AG04449 (cell line): ENCODE measurements at regions of chr12 and their contacts with region 1.

Region 1: DNA sequence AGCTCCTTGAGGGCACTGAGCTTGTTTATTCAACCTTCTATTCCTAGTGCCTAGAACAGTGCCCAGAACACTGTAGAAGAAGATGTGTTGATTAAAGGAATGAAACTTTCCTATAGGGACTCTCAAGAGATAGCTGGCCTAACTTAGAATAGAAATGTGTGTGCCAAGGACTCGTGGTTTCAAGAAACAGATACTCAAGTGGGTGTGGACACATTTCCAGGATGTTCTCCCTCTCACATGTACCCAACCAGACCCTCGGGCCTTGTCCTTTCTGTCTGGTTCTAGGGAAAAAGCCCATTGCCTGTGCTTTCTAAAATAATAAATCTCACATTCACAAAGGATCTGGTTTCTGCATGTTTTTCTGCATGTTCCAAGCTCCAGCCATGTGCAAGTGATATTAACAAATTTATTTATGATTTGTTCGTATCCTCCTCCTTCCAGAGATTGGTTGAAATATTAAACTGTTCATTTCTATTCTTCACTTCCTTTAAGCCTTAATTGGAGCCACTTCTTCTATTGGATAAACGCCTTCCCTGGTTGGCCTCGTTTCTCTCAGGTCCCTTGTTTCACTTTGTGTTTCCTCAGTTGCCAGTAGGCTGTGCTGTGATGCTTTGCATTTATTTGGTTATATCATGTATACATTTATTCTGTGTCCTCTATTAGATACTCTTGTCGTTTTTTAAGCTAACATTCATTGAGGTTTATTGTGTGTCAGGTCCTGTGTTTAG is 89.8 kb downstream of the CRADD start:
- DNase-seq: no peak
- H3K4me3 ChIP-seq: no peak overlapping the region
- CTCF ChIP-seq: peak; percentile 61

Region 2: GRCh38 chr12:93502802-93503623 is 263.9 kb before region 1 on chr12:
- CTCF ChIA-PET with region 1: interaction called, 45 read pairs
- POLR2A ChIA-PET with region 1: no interaction called
- DNase-seq: no peak
- H3K4me3 ChIP-seq: no peak overlapping the region
- CTCF ChIP-seq: peak; percentile 55

Region 3: DNA sequence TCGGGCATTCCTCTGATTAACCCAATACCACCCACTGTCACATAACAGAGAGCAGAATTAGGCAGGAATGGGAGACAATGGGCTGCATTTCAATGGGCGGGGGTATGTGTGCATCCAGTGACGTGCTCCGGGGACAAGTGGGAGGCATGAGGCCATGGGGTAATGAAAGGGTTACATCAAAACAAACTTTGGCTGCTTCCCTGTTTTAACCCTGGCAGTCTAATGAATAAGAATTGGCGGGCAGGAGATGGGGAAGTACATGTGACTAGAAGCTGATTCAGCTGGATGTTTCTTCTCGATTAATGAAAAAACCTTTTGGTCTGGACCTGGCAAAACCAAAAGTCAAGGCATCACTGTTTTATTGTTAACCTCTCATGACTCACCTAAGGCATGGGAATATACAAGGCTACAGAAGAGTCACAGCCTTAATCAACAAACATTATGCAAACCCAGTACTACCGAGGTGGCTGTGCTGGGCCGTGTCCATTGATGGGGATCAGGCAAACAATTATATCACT is 150.3 kb before region 1 on chr12:
- CTCF ChIA-PET with region 1: no interaction called
- POLR2A ChIA-PET with region 1: no interaction called
- DNase-seq: no peak
- H3K4me3 ChIP-seq: no peak overlapping the region
- CTCF ChIP-seq: no peak

Region 4: GRCh38 chr12:93742110-93742934 is 24.6 kb before region 1 on chr12:
- CTCF ChIA-PET with region 1: interaction called, 11 read pairs
- POLR2A ChIA-PET with region 1: no interaction called
- DNase-seq: no peak
- H3K4me3 ChIP-seq: peak overlapping the region; percentile 61
- CTCF ChIP-seq: peak; percentile 13

Region 5: DNA sequence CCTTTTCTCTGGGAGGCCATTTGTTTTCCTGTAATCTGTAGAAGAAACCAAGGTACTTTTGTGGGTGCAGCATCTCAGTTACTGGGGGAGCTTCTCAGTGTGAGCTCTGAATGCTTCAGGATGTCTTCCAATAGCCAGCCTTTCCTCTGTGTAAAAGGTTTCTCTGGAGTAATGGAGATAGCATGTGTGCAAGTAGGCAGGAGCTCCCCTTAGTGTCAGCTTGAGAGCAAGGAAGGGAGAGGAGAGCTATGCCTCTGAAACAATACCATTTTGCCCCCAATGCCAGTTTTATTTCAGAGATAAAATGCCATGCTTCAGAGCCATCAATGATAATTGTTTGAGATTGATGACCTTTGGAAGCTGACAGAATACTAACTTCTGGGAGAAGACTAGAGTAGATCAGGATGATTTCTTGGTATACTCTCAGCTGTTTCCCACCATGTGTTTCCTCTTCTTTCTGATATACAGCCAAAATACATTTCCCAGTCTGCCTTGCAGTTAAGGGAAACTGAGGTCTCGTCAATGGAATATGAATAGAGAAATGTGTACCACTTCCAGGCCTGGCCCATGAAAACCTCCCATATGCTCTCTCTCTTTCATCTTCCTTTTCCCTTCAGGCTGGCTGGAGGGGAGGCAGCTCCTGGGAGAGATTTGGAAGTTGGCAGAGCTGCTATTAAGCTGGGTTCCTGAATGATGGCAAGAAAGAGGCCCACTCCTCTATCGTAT is 35.9 kb after region 1 on chr12:
- CTCF ChIA-PET with region 1: interaction called, 18 read pairs
- POLR2A ChIA-PET with region 1: no interaction called
- DNase-seq: no peak
- H3K4me3 ChIP-seq: no peak overlapping the region
- CTCF ChIP-seq: peak; percentile 43

Region 6: GRCh38 chr12:93860668-93861373 is 93.9 kb after region 1 on chr12:
- CTCF ChIA-PET with region 1: no interaction called
- POLR2A ChIA-PET with region 1: no interaction called
- DNase-seq: no peak
- H3K4me3 ChIP-seq: no peak overlapping the region
- CTCF ChIP-seq: no peak

Region 7: GRCh38 chr12:93873561-93873960 is 106.6 kb after region 1 on chr12:
- CTCF ChIA-PET with region 1: no interaction called
- POLR2A ChIA-PET with region 1: no interaction called
- DNase-seq: no peak
- H3K4me3 ChIP-seq: no peak overlapping the region
- CTCF ChIP-seq: no peak

Region 8: GRCh38 chr12:93918262-93918661 is 151.3 kb after region 1 on chr12:
- CTCF ChIA-PET with region 1: interaction called, 12 read pairs
- POLR2A ChIA-PET with region 1: no interaction called
- DNase-seq: peak; percentile 49
- H3K4me3 ChIP-seq: no peak overlapping the region
- CTCF ChIP-seq: no peak

Region 9: DNA sequence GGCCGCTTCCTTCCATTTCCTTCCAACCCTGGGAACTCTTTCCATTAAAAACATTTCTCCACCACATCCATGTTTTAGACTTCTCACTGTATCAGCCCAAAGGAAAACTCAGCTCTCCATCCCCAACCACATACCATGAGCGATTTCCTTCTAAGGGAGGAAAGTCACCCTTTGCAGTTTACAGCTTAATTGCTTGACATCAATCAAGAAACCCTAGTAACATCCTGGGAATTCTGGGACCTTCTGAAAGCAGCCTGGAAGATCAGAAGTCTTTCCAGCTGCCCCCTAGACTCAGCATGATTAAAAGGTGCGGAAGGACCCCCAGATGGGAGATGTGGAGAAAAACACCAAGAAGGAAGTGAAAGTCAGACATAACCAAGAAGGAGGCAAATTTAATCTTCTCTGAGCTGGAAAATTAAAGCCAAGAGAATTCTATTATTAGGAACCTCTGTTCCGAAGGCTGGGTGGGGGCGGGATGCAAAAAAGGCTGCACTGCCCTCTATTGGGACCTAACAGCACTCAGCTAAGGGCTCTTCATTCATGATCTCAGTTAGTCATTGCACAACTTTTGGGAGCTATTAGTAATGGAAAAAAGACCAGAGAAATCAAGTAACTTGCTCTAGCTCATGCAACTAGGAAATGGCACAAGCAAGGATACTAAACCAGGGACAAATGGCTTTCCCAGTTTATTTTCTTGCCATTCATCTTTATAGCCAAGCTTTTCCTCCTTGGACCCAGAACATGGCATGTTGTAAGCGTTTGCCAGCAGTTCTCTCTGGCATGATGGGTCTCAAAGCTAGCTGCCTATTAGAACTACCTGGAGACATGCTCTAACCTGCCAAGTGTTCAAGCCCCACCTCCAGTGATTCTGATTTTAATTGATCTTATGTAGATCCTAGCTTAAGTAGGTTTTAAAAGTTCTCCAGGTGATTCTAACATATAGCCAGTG is 308.3 kb after region 1 on chr12:
- CTCF ChIA-PET with region 1: interaction called, 76 read pairs
- POLR2A ChIA-PET with region 1: no interaction called
- DNase-seq: peak; percentile 72
- H3K4me3 ChIP-seq: no peak overlapping the region
- CTCF ChIP-seq: peak; percentile 64